ENCODE measurements at regions of chr22 and their contacts with region 1.

Region 1: GRCh38 chr22:37282385-37282677 is at the start of gene CYTH4:
- DNase-seq: peak; percentile 79
- ATAC-seq: peak; percentile 87
- H3K4me3 Mint-ChIP-seq: peak within 1 kb of the TSS; percentile 89
- H3K27ac Mint-ChIP-seq: peak within 1 kb of the TSS; percentile 99
- H3K4me1 Mint-ChIP-seq: peaks cover 50% of the 10 kb centered on the region
- H3K27me3 Mint-ChIP-seq: no peaks in the 10 kb centered on the region
- total RNA-seq, gene CYTH4: 149 to 157 TPM

Region 2: DNA sequence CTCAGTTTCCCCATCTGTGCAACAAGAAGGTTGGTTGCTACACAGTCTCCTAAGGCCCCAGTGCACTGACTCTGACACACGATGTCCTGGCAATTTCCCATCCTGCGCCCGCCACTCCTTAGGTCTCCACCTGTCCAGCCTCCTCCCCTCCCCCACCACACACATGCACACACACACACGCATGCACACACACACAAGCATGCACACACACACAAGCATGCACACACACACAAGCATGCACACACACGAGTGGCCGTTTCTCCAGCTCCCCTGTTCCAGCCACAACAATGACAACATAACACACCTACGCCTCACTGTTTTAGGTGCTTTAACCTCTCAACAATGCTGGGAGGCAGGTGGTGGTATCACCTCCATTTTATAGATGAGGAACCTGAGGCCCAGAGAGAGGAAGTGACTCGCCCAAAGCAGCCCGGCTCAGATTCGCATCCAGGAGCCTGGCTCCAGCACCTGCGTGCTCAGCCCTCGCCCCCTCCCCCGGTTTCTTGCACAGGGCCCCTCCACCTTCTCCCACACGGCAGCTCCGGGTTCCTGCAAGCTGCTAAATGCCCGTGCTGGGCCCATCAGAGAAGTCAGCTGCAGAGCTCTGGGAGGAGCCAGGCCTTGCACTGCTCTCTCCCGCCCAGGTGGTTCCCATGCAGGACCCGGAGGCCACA is 13.0 kb after region 1 on chr22:
- POLR2A ChIA-PET with region 1: interaction called, 16 read pairs
- DNase-seq: no peak
- ATAC-seq: peak; percentile 52
- H3K4me3 Mint-ChIP-seq: peak overlapping the region; percentile 53
- H3K27ac Mint-ChIP-seq: peak overlapping the region; percentile 78
- H3K4me1 Mint-ChIP-seq: peaks cover 60% of the 10 kb centered on the region
- H3K27me3 Mint-ChIP-seq: no peaks in the 10 kb centered on the region

Region 3: DNA sequence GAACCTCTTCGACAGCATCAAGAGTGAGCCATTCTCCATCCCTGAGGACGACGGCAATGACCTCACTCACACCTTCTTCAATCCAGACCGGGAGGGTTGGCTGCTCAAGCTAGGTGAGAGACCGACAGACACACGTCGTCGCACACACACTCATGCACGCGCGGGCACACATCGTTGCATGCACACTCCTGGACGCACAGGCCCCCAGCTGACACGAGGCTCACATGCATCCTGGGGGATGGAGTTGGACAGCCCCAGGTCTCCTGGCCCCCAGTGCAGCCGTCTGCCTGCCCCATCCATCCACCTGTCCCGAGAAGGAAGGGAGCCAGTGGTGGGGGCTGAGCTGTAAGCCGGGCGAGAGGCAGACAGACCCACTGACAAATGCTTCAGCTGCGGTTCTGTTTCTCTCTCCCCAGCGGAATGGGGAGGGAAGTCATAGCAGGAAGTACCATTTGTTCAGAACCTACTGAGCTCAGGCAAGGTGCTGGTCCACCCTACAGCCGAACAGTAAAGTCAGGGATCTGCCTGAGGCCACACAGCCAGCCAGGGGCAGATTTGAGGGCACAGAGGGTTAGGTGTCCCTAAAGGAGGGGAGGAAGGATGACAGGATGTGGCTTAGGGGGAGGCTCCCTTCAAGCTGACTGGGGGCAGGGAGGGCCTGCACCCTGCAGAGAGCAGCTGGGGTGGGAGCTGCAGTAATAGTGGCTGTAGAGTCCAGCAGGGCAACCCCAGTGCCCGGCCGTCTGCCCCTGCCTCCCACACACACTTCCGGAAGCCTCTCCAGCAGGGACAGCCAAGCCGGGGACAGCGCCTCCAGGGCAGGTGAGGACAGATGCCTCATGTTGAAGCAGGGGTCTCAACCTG is 27.1 kb after region 1 on chr22:
- POLR2A ChIA-PET with region 1: interaction called, 23 read pairs
- DNase-seq: peak; percentile 73
- ATAC-seq: peak; percentile 58
- H3K4me3 Mint-ChIP-seq: peak overlapping the region; percentile 83
- H3K27ac Mint-ChIP-seq: peak overlapping the region; percentile 99
- H3K4me1 Mint-ChIP-seq: peaks cover 83% of the 10 kb centered on the region
- H3K27me3 Mint-ChIP-seq: no peaks in the 10 kb centered on the region

Measured in activated naive CD8-positive, alpha-beta T cell treated with anti-CD3 and anti-CD28 coated beads, Interleukin-2, amount 10 ng/mL, durations not matched to agents 7 days and 5 days (primary cell).